Activated B cell treated with CpG ODN at 0.5 μM for 24 hours (primary cell): ENCODE measurements at regions of chr5 and their contacts with region 1.

Region 1: GRCh38 chr5:66171349-66172344 is 27.5 kb downstream of the SREK1 start:
- DNase-seq: no peak
- ATAC-seq: peak; percentile 65
- H3K4me3 Mint-ChIP-seq: no peak overlapping the region
- H3K27ac Mint-ChIP-seq: no peak overlapping the region
- H3K4me1 Mint-ChIP-seq: peaks cover 14% of the 10 kb centered on the region
- H3K27me3 Mint-ChIP-seq: no peaks in the 10 kb centered on the region
- CTCF ChIP-seq: no peak

Region 2: GRCh38 chr5:65742565-65743231 is 428.9 kb before region 1 on chr5:
- CTCF ChIA-PET with region 1: no interaction called
- POLR2A ChIA-PET with region 1: no interaction called
- intact Hi-C with region 1: loop called (anchors 1 kb)
- DNase-seq: no peak
- ATAC-seq: peak; percentile 54
- H3K4me3 Mint-ChIP-seq: no peak overlapping the region
- H3K27ac Mint-ChIP-seq: no peak overlapping the region
- H3K4me1 Mint-ChIP-seq: peaks cover 5% of the 10 kb centered on the region
- H3K27me3 Mint-ChIP-seq: no peaks in the 10 kb centered on the region
- CTCF ChIP-seq: no peak

Region 3: DNA sequence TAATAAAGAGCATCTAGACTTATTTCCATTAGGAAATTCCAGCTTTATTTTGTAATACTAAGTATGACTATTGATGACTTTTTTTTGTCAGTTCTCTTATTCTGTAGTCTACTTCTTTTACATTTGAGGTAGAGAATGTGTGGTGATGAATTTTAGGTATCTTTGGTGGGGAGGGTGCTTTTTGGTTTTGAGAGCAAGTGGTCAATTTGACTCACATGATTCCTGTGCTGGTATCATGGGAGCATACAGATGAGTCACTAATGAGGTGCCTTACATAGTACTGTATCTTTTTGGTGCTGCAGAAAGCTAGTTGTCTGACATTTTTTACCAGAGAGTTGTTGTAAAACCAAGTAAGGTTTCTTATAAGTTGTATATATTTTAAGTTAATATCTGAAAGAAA is 210.0 kb before region 1 on chr5:
- CTCF ChIA-PET with region 1: no interaction called
- POLR2A ChIA-PET with region 1: no interaction called
- intact Hi-C with region 1: no loop called
- DNase-seq: no peak
- ATAC-seq: peak; percentile 95
- H3K4me3 Mint-ChIP-seq: peak overlapping the region; percentile 2
- H3K27ac Mint-ChIP-seq: peak overlapping the region; percentile 60
- H3K4me1 Mint-ChIP-seq: peaks cover 52% of the 10 kb centered on the region
- H3K27me3 Mint-ChIP-seq: no peaks in the 10 kb centered on the region
- CTCF ChIP-seq: no peak

Region 4: GRCh38 chr5:66209350-66209749 is 37.7 kb after region 1 on chr5:
- CTCF ChIA-PET with region 1: no interaction called
- POLR2A ChIA-PET with region 1: no interaction called
- intact Hi-C with region 1: no loop called
- DNase-seq: no peak
- ATAC-seq: no peak
- H3K4me3 Mint-ChIP-seq: no peak overlapping the region
- H3K27ac Mint-ChIP-seq: no peak overlapping the region
- H3K4me1 Mint-ChIP-seq: no peaks in the 10 kb centered on the region
- H3K27me3 Mint-ChIP-seq: no peaks in the 10 kb centered on the region
- CTCF ChIP-seq: no peak